ENCODE measurements at regions of chr7 and their contacts with region 1.

Region 1: DNA sequence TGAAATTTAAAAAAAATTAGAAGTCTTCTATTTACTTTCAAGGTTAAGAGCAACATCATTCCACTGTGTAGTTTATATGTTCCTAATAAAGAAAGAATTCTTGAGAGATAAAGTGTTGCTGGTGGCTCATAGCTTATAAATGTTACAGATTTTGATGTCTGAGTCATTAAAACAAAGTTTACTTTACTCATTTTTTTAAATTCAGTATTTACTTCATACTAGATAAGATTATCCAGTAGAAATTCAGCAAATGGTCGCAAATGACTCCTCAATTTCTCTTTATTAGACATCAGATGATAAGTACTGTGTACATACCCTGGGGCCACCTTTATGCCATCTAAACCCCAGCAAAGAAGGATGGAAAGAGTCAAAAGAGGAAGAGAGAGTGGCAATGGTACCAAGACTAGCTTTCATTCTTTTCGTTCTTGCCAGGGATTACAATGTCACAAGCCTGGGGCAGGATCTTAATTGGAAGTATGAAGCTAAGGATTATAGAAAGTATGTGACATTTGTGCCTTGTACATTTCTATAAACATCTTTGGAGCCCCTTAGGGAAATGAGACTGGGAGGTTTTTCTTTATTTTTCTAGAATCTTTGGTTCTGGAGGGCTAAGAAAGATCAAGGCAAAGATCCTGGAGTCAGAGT is 206.1 kb downstream of the CHRM2 start:
- DNase-seq: peak; percentile 85
- ATAC-seq: peak; percentile 73
- H3K4me3 ChIP-seq: 0 out of 2 replicates have a peak overlapping the region, but pooled peaks have one; percentile 3
- H3K27ac ChIP-seq: peak overlapping the region; percentile 90
- H3K4me1 ChIP-seq: peaks cover 33% of the 10 kb centered on the region
- H3K27me3 ChIP-seq: no peaks in the 10 kb centered on the region
- CTCF ChIP-seq: no peak

Region 2: GRCh38 chr7:137001041-137001440 is 73.5 kb before region 1 on chr7:
- CTCF ChIA-PET with region 1: no interaction called
- POLR2A ChIA-PET with region 1: no interaction called
- intact Hi-C with region 1: loop called (anchors 2 kb)
- DNase-seq: no peak
- ATAC-seq: peak; percentile 2; the same call in 1 of the 2 replicates
- H3K4me3 ChIP-seq: no peak overlapping the region
- H3K27ac ChIP-seq: no peak overlapping the region
- H3K4me1 ChIP-seq: peaks cover 46% of the 10 kb centered on the region
- H3K27me3 ChIP-seq: no peaks in the 10 kb centered on the region
- CTCF ChIP-seq: no peak

Region 3: GRCh38 chr7:137120690-137121089 is 46.2 kb after region 1 on chr7:
- CTCF ChIA-PET with region 1: no interaction called
- POLR2A ChIA-PET with region 1: no interaction called
- intact Hi-C with region 1: loop called (anchors 1 kb)
- DNase-seq: peak; percentile 81
- ATAC-seq: peak; percentile 94
- H3K4me3 ChIP-seq: no peak overlapping the region
- H3K27ac ChIP-seq: peak overlapping the region; percentile 81
- H3K4me1 ChIP-seq: peaks cover 21% of the 10 kb centered on the region
- H3K27me3 ChIP-seq: no peaks in the 10 kb centered on the region
- CTCF ChIP-seq: no peak

Region 4: GRCh38 chr7:137142376-137142775 is 67.9 kb after region 1 on chr7:
- CTCF ChIA-PET with region 1: no interaction called
- POLR2A ChIA-PET with region 1: no interaction called
- intact Hi-C with region 1: loop called (anchors 1 kb)
- DNase-seq: peak; percentile 90
- ATAC-seq: peak; percentile 95
- H3K4me3 ChIP-seq: no peak overlapping the region
- H3K27ac ChIP-seq: peak overlapping the region; percentile 90
- H3K4me1 ChIP-seq: peaks cover 36% of the 10 kb centered on the region
- H3K27me3 ChIP-seq: no peaks in the 10 kb centered on the region
- CTCF ChIP-seq: no peak

Measured in PC-3 (cell line).